ENCODE measurements at regions of chr4 and their contacts with region 1.

Region 1: GRCh38 chr4:1870578-1871443 is at the start of gene NSD2:
- DNase-seq: peak; percentile 87
- H3K4me3 ChIP-seq: peak within 1 kb of the TSS; percentile 83 to 93
- H3K27ac ChIP-seq: peak within 1 kb of the TSS; percentile 97 to 99
- H3K4me1 ChIP-seq: peaks cover 2% of the 10 kb centered on the region
- H3K27me3 ChIP-seq: no peaks in the 10 kb centered on the region
- CTCF ChIP-seq: no peak
- POLR2A ChIP-seq: peak; percentile 55
- total RNA-seq, gene NSD2: 18.0 to 75.0 TPM

Region 2: GRCh38 chr4:1792832-1793495 is 77.8 kb before region 1 on chr4 and contains the start of gene FGFR3:
- intact Hi-C with region 1: no loop called
- DNase-seq: peak; percentile 27
- H3K4me3 ChIP-seq: peak within 1 kb of the TSS; percentile 32 to 46
- H3K27ac ChIP-seq: peak within 1 kb of the TSS in 1 of 2 donors; percentile 31
- H3K4me1 ChIP-seq: peaks cover 10% of the 10 kb centered on the region
- H3K27me3 ChIP-seq: no peaks in the 10 kb centered on the region
- CTCF ChIP-seq: no peak
- POLR2A ChIP-seq: peak; percentile 12
- total RNA-seq, gene FGFR3: 8.7 to 78.2 TPM

Region 3: GRCh38 chr4:1856042-1856788 is 14.6 kb before region 1 on chr4 and contains the start of gene LETM1:
- intact Hi-C with region 1: loop called (anchors 2 kb)
- DNase-seq: peak; percentile 95
- H3K4me3 ChIP-seq: peak within 1 kb of the TSS; percentile 82 to 94
- H3K27ac ChIP-seq: peak within 1 kb of the TSS; percentile 77 to 82
- H3K4me1 ChIP-seq: peaks cover 5% of the 10 kb centered on the region
- H3K27me3 ChIP-seq: no peaks in the 10 kb centered on the region
- CTCF ChIP-seq: peak in 3 of 4 experiments; percentile 6 to 33 (median 23)
- POLR2A ChIP-seq: peak; percentile 58
- total RNA-seq, gene LETM1: 32.1 to 63.1 TPM